MCF 10A (cell line): ENCODE measurements at regions of chr14 and their contacts with region 1.

Region 1: GRCh38 chr14:61694830-61695694 is at the start of gene HIF1A:
- DNase-seq: peak; percentile 98
- H3K4me3 Mint-ChIP-seq: peak within 1 kb of the TSS; percentile 95
- H3K27ac Mint-ChIP-seq: peak within 1 kb of the TSS; percentile 90
- H3K4me1 Mint-ChIP-seq: peaks cover 23% of the 10 kb centered on the region
- H3K27me3 Mint-ChIP-seq: no peaks in the 10 kb centered on the region
- CTCF ChIP-seq: no peak
- total RNA-seq, gene HIF1A: 193 and 202 TPM in 2 replicates

Region 2: GRCh38 chr14:61512026-61512834 is 182.8 kb before region 1 on chr14:
- CTCF ChIA-PET with region 1: no interaction called
- POLR2A ChIA-PET with region 1: interaction called, 16 read pairs
- intact Hi-C with region 1: no loop called
- DNase-seq: peak; percentile 83
- H3K4me3 Mint-ChIP-seq: peak overlapping the region; percentile 38
- H3K27ac Mint-ChIP-seq: peak overlapping the region; percentile 61
- H3K4me1 Mint-ChIP-seq: peaks cover 19% of the 10 kb centered on the region
- H3K27me3 Mint-ChIP-seq: no peaks in the 10 kb centered on the region
- CTCF ChIP-seq: no peak

Region 3: DNA sequence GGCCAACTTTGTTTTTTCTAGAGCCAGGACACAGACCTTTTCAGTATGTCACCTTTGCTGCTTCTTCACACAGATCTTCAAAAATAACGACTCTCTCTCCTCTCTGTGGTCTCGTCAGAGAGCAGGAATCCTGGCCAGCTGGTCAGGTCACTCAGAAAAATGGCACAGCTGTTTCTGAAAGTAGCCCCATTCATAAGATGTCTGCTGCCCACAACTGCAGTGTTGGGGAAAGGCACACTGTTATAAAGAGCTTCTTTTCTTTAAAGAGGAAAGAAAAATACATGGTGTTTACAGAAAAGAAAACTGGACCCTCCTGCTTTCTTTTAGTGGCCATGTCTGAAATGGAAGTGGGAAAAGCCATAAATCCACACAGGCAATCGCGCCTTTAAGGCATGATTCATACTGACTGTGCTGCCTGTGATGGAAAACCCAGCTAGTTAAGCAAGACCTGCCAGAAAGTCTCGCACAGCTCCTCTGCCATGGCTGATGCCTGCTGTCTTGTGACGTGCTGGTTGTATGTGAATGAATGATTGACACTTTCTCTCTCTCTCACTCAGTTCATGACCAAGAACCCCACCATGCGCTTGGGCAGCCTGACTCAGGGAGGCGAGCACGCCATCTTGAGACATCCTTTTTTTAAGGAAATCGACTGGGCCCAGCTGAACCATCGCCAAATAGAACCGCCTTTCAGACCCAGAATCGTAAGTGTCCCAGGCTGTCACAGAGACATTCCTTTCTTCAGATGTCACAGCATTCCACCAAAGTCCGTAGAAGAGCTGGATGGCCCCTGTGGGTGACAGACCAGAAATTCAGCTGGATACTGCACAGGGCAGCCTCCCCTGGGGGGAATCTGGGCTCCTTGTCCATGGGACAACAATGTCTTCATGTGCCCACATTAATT is 147.6 kb before region 1 on chr14:
- CTCF ChIA-PET with region 1: interaction called, 4 read pairs
- POLR2A ChIA-PET with region 1: interaction called, 20 read pairs
- intact Hi-C with region 1: no loop called
- DNase-seq: peak; percentile 86
- H3K4me3 Mint-ChIP-seq: no peak overlapping the region
- H3K27ac Mint-ChIP-seq: peak overlapping the region; percentile 69
- H3K4me1 Mint-ChIP-seq: peaks cover 20% of the 10 kb centered on the region
- H3K27me3 Mint-ChIP-seq: no peaks in the 10 kb centered on the region
- CTCF ChIP-seq: no peak

Region 4: DNA sequence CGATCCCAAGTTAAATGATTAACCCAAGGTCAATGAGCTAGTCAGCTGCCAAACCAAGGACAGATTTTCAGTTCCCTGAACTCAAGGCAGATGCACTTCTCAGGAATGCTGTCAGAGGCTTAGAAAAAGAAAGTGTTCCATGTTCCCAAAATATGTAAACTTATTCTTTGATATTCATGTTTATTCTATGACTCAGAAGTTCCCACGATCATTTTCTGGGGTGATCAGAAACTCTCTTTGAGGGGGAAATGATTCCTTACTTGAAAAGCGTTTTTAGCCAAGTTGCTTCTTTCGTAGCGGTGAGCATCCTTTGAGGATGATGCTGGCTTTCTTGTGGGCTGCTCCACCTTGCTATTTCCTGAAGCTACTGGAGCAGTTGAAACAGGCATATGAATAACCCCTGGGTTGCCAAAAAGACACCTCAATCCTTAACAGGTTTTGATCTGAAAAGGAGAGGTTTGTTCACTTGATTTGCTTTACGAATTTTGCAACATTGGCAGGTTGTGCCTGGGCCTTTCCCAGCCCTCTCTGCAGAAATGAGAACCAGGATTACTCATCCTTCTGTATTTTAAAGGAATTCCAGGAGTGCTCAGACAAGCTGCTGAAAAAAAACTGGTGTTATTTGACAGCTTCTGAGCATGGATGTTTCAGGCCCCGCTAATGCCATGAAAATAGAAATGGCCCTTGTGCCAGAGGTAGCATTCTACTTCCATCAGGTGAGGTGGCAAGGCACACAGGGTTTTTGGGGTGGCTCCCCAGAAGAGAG is 121.1 kb before region 1 on chr14:
- CTCF ChIA-PET with region 1: interaction called, 3 read pairs
- POLR2A ChIA-PET with region 1: interaction called, 45 read pairs
- intact Hi-C with region 1: no loop called
- DNase-seq: peak; percentile 87
- H3K4me3 Mint-ChIP-seq: peak overlapping the region; percentile 31
- H3K27ac Mint-ChIP-seq: peak overlapping the region; percentile 91
- H3K4me1 Mint-ChIP-seq: peaks cover 42% of the 10 kb centered on the region
- H3K27me3 Mint-ChIP-seq: no peaks in the 10 kb centered on the region
- CTCF ChIP-seq: no peak

Region 5: DNA sequence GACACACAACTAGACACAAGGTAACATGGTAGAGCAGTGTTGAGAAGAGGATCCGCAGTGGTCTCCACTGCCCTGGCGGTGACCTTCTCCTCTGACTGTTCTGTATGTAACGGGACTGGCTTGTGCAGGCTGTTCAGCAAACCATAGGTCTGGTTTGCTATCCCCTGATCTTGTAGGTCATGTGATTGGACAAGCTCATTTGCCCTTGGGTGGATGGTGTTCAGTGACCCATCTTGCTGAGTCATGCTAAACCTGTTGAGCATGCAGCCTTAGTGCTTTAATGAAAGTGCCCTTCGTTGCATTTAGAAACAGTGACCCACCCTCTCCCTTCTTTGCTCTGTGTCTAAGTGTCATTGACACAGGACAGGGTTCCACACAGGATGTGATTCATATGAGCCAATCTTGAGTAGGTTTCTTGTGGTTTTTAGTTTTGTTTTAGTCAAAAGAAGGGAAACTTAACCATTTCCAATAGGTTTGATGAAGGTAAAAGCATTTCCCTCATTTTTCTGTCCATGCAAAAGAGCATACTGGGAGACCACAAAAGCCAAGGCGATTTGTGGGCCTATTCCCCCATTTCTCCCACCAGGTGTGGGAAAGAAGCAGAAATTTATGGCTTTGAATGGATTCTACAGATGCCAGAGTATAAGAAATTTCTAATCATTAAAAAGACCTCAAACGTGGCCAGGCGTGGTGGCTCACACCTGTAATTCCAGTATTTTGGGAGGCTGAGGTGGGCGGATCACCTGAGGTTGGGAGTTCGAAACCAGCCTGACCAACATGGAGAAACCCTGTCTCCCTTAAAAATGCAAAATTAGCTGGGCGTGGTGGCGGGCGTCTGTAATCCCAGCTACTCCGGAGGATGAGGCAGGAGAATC is 32.4 kb before region 1 on chr14:
- CTCF ChIA-PET with region 1: interaction called, 5 read pairs
- POLR2A ChIA-PET with region 1: interaction called, 26 read pairs
- intact Hi-C with region 1: no loop called
- DNase-seq: peak; percentile 80
- H3K4me3 Mint-ChIP-seq: peak overlapping the region; percentile 31
- H3K27ac Mint-ChIP-seq: peak overlapping the region; percentile 85
- H3K4me1 Mint-ChIP-seq: peaks cover 29% of the 10 kb centered on the region
- H3K27me3 Mint-ChIP-seq: no peaks in the 10 kb centered on the region
- CTCF ChIP-seq: no peak

Region 6: DNA sequence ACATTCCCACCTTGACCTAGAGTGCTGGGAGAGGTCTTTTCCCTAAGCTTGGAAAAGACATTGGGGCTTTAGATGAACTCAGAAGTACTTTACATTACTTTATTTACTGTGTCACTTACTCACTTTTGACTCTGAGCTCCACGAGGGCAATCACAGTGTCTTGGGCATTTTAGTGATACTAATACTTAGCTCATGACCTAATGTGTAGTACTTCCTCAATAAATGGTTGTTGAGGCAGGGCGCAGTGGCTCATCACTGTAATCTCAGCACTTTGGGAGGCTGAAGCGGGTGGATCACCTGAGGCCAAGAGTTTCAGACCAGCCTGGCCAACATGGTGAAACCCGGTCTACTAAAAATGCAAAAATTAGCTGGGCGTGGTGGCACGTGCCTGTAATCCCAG is 47.3 kb after region 1 on chr14:
- CTCF ChIA-PET with region 1: no interaction called
- POLR2A ChIA-PET with region 1: no interaction called
- intact Hi-C with region 1: no loop called
- DNase-seq: no peak
- H3K4me3 Mint-ChIP-seq: no peak overlapping the region
- H3K27ac Mint-ChIP-seq: no peak overlapping the region
- H3K4me1 Mint-ChIP-seq: peaks cover 6% of the 10 kb centered on the region
- H3K27me3 Mint-ChIP-seq: no peaks in the 10 kb centered on the region
- CTCF ChIP-seq: no peak

Region 7: GRCh38 chr14:61761959-61762786 is 67.1 kb after region 1 on chr14 and contains the start of gene SNAPC1:
- CTCF ChIA-PET with region 1: no interaction called
- POLR2A ChIA-PET with region 1: interaction called, 21 read pairs
- intact Hi-C with region 1: no loop called
- DNase-seq: peak; percentile 99
- H3K4me3 Mint-ChIP-seq: peak within 1 kb of the TSS; percentile 92
- H3K27ac Mint-ChIP-seq: peak within 1 kb of the TSS; percentile 91
- H3K4me1 Mint-ChIP-seq: peaks cover 21% of the 10 kb centered on the region
- H3K27me3 Mint-ChIP-seq: no peaks in the 10 kb centered on the region
- CTCF ChIP-seq: no peak
- total RNA-seq, gene SNAPC1: 18.4 and 21.0 TPM in 2 replicates

Region 8: DNA sequence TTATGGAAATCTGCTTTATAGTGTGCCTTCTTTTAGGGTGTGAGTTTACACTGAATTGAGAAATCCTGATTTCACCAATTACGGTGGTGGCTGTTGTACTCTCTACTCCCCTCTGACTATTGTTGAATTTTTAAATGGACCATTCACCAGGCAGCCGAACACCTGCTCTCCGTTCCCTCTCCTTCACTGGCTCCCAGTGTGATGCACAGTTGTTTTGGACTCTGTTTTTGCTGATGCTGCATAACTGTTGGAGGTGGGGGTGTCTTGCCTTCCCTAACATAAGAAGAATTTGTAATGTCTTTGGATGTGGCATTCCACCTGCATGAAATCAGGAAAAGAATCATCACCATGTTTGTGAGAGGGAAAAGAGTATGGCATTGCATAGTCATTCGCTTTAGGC is 408.4 kb after region 1 on chr14:
- CTCF ChIA-PET with region 1: no interaction called
- POLR2A ChIA-PET with region 1: no interaction called
- intact Hi-C with region 1: no loop called
- DNase-seq: no peak
- H3K4me3 Mint-ChIP-seq: no peak overlapping the region
- H3K27ac Mint-ChIP-seq: no peak overlapping the region
- H3K4me1 Mint-ChIP-seq: no peaks in the 10 kb centered on the region
- H3K27me3 Mint-ChIP-seq: no peaks in the 10 kb centered on the region
- CTCF ChIP-seq: no peak

Region 9: GRCh38 chr14:62117010-62117750 is 422.1 kb after region 1 on chr14:
- CTCF ChIA-PET with region 1: no interaction called
- POLR2A ChIA-PET with region 1: no interaction called
- intact Hi-C with region 1: no loop called
- DNase-seq: no peak
- H3K4me3 Mint-ChIP-seq: peak overlapping the region; percentile 20
- H3K27ac Mint-ChIP-seq: no peak overlapping the region
- H3K4me1 Mint-ChIP-seq: no peaks in the 10 kb centered on the region
- H3K27me3 Mint-ChIP-seq: no peaks in the 10 kb centered on the region
- CTCF ChIP-seq: no peak